Naive thymus-derived CD4-positive, alpha-beta T cell (primary cell): ENCODE measurements at regions of chr1 and their contacts with region 1.

Region 1: DNA sequence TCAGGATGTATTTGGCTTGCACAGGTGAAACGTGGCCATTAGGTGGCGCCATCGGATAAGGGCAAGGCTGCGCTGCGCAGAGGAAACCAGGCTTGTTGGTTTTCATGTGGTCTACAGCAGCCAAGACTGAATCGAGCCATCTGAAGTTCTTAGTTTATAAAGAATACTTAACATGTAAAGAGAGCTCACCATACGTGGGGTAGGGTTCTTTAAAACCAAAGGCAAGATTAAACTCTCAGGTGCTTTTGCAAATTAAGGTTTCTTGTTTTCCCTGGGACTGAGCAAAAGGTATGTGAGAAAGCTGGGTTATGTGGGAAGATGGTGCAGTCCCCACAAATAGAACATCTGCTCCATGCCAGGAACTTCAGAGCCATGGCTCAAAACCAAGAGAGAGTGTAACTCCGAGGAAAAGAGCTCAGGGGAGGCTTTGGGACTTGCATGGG is 9.3 kb downstream of the MASP2 start:
- DNase-seq: peak; percentile 76 to 90 (median 85)
- ATAC-seq: peak; percentile 99
- H3K4me3 ChIP-seq: no peak overlapping the region
- H3K4me3 Mint-ChIP-seq: no peak overlapping the region
- H3K27ac ChIP-seq: no peak overlapping the region
- H3K27ac Mint-ChIP-seq: no peak overlapping the region
- H3K4me1 ChIP-seq: no peaks in the 10 kb centered on the region
- H3K4me1 Mint-ChIP-seq: peaks cover 0 to 9% (median 6%) of the 10 kb centered on the region in 7 donors
- H3K27me3 ChIP-seq: peaks cover 0 to 4% of the 10 kb centered on the region in 2 donors
- H3K27me3 Mint-ChIP-seq: no peaks in the 10 kb centered on the region

Region 2: DNA sequence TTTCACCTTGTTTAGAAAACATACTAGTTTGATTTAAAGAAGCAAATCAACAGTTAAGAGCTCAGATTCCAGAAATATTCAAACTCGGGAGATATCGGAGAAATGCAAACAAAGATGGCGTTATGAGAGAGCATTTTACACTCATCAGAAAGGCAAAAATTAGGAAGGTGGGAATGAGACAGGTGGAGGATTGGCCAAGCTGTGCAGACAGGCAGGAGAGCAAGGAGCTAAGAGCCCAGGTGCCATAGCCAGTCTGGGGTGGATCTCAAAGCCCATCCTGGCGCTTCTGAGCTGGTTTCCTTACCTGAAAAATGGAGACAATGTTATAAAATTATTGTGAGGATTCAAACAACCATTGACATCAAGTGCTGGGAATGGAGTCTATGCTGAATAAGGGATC is 44.9 kb before region 1 on chr1:
- CTCF ChIA-PET with region 1: no interaction called
- POLR2A ChIA-PET with region 1: no interaction called
- intact Hi-C with region 1: no loop called
- DNase-seq: no peak
- ATAC-seq: no peak
- H3K4me3 ChIP-seq: no peak overlapping the region
- H3K4me3 Mint-ChIP-seq: no peak overlapping the region
- H3K27ac ChIP-seq: no peak overlapping the region
- H3K27ac Mint-ChIP-seq: no peak overlapping the region
- H3K4me1 ChIP-seq: no peaks in the 10 kb centered on the region
- H3K4me1 Mint-ChIP-seq: no peaks in the 10 kb centered on the region
- H3K27me3 ChIP-seq: no peaks in the 10 kb centered on the region
- H3K27me3 Mint-ChIP-seq: peaks cover 0 to under 1% (median 0%) of the 10 kb centered on the region in 5 donors

Region 3: DNA sequence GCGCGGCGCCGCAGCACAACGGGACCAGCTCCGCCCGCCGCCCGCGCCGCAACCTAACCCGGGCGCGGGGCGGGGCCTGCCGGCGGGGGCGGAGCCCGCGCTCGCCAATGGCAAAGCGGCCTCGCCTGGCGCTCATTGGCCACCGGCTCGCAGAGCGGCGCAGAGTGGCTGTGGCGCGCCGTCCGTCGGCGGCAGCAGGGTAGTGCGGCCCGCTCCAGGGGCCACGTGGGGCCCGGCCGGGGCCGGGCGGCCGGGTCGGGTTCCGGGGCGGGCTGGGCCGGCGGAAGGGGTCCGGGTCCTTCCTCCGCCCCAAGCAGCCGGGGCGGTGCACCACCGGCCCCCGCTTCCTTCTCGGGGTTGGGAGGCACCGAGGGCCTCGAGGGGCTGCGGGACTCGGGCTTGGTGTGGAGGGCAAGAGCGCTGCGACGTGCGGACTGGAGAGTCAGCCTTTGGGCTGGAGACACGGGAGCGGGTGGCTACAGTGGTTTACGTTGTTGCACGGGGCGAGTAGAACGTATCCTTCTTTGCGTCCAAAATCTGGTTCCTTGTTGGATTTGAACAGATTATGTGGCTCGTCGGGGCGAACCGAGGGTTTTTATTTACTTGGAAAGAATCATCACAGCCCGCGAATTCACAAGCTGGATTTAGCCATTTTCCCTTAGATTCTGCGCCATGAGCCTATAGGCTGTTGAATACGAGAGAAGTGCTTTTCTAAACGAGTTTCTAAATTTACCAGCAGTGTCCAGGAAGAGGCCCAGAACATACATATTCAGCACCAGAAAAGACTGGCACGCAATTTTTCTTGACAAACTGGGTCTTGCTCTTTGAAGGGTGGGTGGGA is 22.4 kb after region 1 on chr1 and contains the start of gene SRM:
- CTCF ChIA-PET with region 1: interaction called, 11 read pairs
- POLR2A ChIA-PET with region 1: interaction called, 3 read pairs
- intact Hi-C with region 1: loop called (anchors 1 kb)
- DNase-seq: peak; percentile 84 to 95 (median 91)
- ATAC-seq: peak; percentile 97
- H3K4me3 ChIP-seq: peak within 1 kb of the TSS; percentile 92
- H3K4me3 Mint-ChIP-seq: peak within 1 kb of the TSS; percentile 91 to 98 (median 93)
- H3K27ac ChIP-seq: peak within 1 kb of the TSS; percentile 85
- H3K27ac Mint-ChIP-seq: peak within 1 kb of the TSS; percentile 81 to 95 (median 91)
- H3K4me1 ChIP-seq: peaks cover 5 to 19% of the 10 kb centered on the region in 2 donors
- H3K4me1 Mint-ChIP-seq: peaks cover 6 to 37% (median 24%) of the 10 kb centered on the region in 7 donors
- H3K27me3 ChIP-seq: no peaks in the 10 kb centered on the region
- H3K27me3 Mint-ChIP-seq: no peaks in the 10 kb centered on the region
- total RNA-seq, gene SRM: 30.9 to 116 (median 44.1) TPM

Region 4: DNA sequence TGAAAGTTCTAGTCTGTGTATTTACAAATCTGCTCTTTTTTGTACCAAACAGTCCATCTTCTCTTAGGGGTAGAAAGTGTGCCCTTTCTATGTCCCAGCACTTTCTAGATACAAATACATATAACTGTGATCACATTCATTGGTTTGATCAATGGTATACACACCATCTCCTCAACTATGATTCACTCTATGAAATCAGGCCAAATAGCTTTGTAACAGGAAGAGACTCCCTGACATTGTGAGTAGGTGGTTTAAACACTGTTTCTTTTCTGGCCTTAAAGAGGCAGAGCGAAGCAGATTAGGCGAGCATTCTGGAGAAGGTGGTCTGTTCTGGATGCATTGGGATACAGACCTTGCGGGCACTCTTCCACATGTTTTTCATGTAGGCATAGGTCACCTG is 101.2 kb after region 1 on chr1:
- CTCF ChIA-PET with region 1: no interaction called
- POLR2A ChIA-PET with region 1: no interaction called
- intact Hi-C with region 1: no loop called
- DNase-seq: no peak
- ATAC-seq: no peak
- H3K4me3 ChIP-seq: no peak overlapping the region
- H3K4me3 Mint-ChIP-seq: no peak overlapping the region
- H3K27ac ChIP-seq: no peak overlapping the region
- H3K27ac Mint-ChIP-seq: no peak overlapping the region
- H3K4me1 ChIP-seq: no peaks in the 10 kb centered on the region
- H3K4me1 Mint-ChIP-seq: peaks cover 0 to 5% (median 0%) of the 10 kb centered on the region in 7 donors
- H3K27me3 ChIP-seq: no peaks in the 10 kb centered on the region
- H3K27me3 Mint-ChIP-seq: no peaks in the 10 kb centered on the region

Region 5: DNA sequence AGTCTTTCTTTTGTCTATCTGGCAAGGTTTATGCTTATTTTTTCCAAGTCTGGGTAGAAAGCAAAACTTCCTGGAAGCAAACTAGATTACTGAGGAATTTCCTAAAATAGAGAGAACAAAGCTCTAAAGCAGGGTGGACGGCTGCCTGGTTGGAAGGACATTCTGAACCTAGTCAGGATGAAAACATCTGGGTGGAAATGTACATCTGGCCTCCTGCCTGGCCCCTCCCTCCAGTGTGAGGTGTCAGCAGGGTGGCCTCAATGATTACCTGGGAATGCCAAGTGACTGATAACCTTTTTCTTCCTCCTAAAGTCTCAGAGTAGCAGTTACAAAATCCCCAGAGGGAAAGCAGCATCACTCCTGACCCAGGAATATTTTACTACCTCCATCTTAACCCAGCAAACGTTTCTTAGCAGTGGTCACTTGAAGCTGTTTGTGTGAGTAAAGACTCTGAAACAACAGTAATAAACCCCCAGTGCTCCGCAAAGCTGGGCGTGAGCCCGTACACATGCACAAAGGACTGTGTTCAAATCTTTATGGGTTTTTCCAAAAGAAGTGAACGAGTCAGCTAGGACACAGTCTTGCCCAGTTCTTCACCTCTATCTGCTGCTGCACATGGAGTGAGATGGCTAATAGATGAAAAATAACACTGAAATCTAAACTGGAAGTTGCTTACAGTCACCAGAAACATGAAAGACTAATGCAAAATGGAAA is 170.3 kb after region 1 on chr1:
- CTCF ChIA-PET with region 1: interaction called, 3 read pairs
- POLR2A ChIA-PET with region 1: no interaction called
- intact Hi-C with region 1: loop called in 1 of 2 experiments (anchors 5 kb)
- DNase-seq: no peak
- ATAC-seq: no peak
- H3K4me3 ChIP-seq: no peak overlapping the region
- H3K4me3 Mint-ChIP-seq: no peak overlapping the region
- H3K27ac ChIP-seq: no peak overlapping the region
- H3K27ac Mint-ChIP-seq: no peak overlapping the region
- H3K4me1 ChIP-seq: no peaks in the 10 kb centered on the region
- H3K4me1 Mint-ChIP-seq: no peaks in the 10 kb centered on the region
- H3K27me3 ChIP-seq: no peaks in the 10 kb centered on the region
- H3K27me3 Mint-ChIP-seq: no peaks in the 10 kb centered on the region

Region 6: GRCh38 chr1:11295905-11296304 is 258.1 kb after region 1 on chr1:
- CTCF ChIA-PET with region 1: interaction called, 4 read pairs
- POLR2A ChIA-PET with region 1: interaction called, 3 read pairs
- intact Hi-C with region 1: loop called in 1 of 2 experiments (anchors 1 kb)
- DNase-seq: peak in 5 of 9 donors; percentile 31 to 55 (median 44)
- ATAC-seq: no peak
- H3K4me3 ChIP-seq: no peak overlapping the region
- H3K4me3 Mint-ChIP-seq: peak overlapping the region in 2 of 10 donors; percentile 18 to 59
- H3K27ac ChIP-seq: peak overlapping the region; percentile 41
- H3K27ac Mint-ChIP-seq: peak overlapping the region in 8 of 9 donors; percentile 55 to 93 (median 85)
- H3K4me1 ChIP-seq: peaks cover 0 to 34% of the 10 kb centered on the region in 2 donors
- H3K4me1 Mint-ChIP-seq: peaks cover 37 to 72% (median 59%) of the 10 kb centered on the region in 7 donors
- H3K27me3 ChIP-seq: no peaks in the 10 kb centered on the region
- H3K27me3 Mint-ChIP-seq: no peaks in the 10 kb centered on the region

Region 7: DNA sequence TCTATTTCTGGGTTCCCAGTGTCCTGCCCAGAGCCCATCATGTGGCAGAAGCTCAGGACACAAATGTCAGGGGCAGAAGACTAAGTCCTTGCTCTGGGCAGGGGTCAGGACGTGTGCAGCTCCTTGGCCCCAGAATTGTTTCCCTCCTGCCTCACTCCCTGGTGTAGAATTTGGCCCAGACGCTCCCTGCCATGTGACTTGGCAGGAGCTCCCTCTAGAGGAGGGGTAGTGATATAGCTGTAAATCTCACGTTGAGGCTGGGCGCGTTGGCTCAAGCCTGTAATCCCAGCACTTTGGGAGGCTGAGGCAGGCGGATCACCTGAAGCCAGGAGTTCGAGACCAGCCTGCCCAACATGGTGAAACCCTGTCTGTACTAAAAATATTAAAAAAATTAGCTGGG is 326.4 kb after region 1 on chr1:
- CTCF ChIA-PET with region 1: no interaction called
- POLR2A ChIA-PET with region 1: no interaction called
- intact Hi-C with region 1: no loop called
- DNase-seq: peak in 1 of 9 donors; percentile 23
- ATAC-seq: no peak
- H3K4me3 ChIP-seq: no peak overlapping the region
- H3K4me3 Mint-ChIP-seq: no peak overlapping the region
- H3K27ac ChIP-seq: no peak overlapping the region
- H3K27ac Mint-ChIP-seq: no peak overlapping the region
- H3K4me1 ChIP-seq: no peaks in the 10 kb centered on the region
- H3K4me1 Mint-ChIP-seq: peaks cover 0 to 9% (median 4%) of the 10 kb centered on the region in 7 donors
- H3K27me3 ChIP-seq: no peaks in the 10 kb centered on the region
- H3K27me3 Mint-ChIP-seq: peaks cover 0 to 4% (median 0%) of the 10 kb centered on the region in 5 donors

Region 8: GRCh38 chr1:11719313-11720032 is 681.7 kb after region 1 on chr1:
- CTCF ChIA-PET with region 1: interaction called, 4 read pairs
- POLR2A ChIA-PET with region 1: interaction called, 4 read pairs
- intact Hi-C with region 1: loop called (anchors 1 kb)
- DNase-seq: peak; percentile 73 to 89 (median 82)
- ATAC-seq: peak; percentile 92
- H3K4me3 ChIP-seq: peak overlapping the region; percentile 66
- H3K4me3 Mint-ChIP-seq: peak overlapping the region; percentile 71 to 89 (median 86)
- H3K27ac ChIP-seq: peak overlapping the region; percentile 62
- H3K27ac Mint-ChIP-seq: peak overlapping the region; percentile 73 to 97 (median 93)
- H3K4me1 ChIP-seq: peaks cover 0 to 5% of the 10 kb centered on the region in 2 donors
- H3K4me1 Mint-ChIP-seq: peaks cover 8 to 21% (median 15%) of the 10 kb centered on the region in 7 donors
- H3K27me3 ChIP-seq: no peaks in the 10 kb centered on the region
- H3K27me3 Mint-ChIP-seq: peaks cover 0 to 10% (median 0%) of the 10 kb centered on the region in 5 donors

Region 9: GRCh38 chr1:12014141-12014991 is 976.6 kb after region 1 on chr1:
- CTCF ChIA-PET with region 1: no interaction called
- POLR2A ChIA-PET with region 1: no interaction called
- intact Hi-C with region 1: no loop called
- DNase-seq: no peak
- ATAC-seq: no peak
- H3K4me3 ChIP-seq: no peak overlapping the region
- H3K4me3 Mint-ChIP-seq: peak overlapping the region in 1 of 10 donors; percentile 67
- H3K27ac ChIP-seq: no peak overlapping the region
- H3K27ac Mint-ChIP-seq: peak overlapping the region in 6 of 9 donors; percentile 28 to 89 (median 50)
- H3K4me1 ChIP-seq: no peaks in the 10 kb centered on the region
- H3K4me1 Mint-ChIP-seq: peaks cover 0 to 51% (median 5%) of the 10 kb centered on the region in 7 donors
- H3K27me3 ChIP-seq: no peaks in the 10 kb centered on the region
- H3K27me3 Mint-ChIP-seq: peaks cover 0 to 3% (median 0%) of the 10 kb centered on the region in 5 donors